ENCODE measurements at regions of chr2 and their contacts with region 1.

Region 1: DNA sequence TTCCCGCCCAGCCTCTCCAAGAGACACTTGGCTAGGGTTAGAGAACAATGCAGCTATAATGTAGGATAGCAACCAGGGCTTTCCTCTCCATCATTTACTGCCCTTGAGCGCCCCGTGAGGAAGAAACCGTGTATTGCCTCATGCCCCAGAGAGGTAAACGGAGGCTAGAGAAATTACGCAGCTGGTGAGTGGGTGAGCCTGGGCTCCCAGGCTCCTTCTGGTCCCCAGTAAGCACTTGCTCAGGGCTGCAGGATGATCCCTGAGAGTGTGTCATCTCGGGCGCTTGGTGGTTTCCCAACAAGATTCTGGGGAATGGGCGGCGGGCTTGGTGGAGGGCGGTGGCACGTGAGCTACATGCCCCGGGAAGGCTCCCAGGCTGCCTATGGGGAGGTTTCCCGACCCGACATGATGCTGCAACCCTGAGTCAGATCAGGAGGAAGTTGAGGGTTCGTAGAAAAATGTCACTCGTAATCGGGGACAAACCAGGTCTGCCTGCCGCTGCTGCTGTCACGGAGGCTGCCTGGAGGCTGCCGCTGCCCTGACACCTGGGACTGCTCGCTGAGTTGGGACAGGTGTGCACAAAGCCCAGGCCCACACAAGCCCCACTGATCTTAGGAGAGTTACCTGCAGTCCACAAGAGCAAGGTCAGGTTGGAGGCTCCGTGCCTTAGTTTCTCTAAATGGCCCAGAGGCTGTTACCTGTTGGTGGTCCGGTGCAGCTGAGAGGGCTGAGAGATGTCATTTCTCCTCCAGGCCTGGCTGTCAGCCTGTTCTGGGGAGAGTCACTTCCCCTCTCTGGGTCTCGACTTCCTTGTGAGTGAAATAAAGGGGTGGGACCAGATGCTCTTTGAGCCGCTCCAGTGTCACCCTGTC is at the start of gene GPR55:
- DNase-seq: peak in 8 of 9 experiments; percentile 24 to 71 (median 54)
- ATAC-seq: peak; percentile 77
- H3K4me3 ChIP-seq: peak within 1 kb of the TSS; percentile 51 to 72
- H3K4me3 Mint-ChIP-seq: peak within 1 kb of the TSS; percentile 87
- H3K27ac ChIP-seq: peak within 1 kb of the TSS; percentile 59 to 61
- H3K27ac Mint-ChIP-seq: peak within 1 kb of the TSS; percentile 95
- H3K4me1 ChIP-seq: peaks cover 40% of the 10 kb centered on the region
- H3K4me1 Mint-ChIP-seq: peaks cover 59% of the 10 kb centered on the region
- H3K27me3 ChIP-seq: no peaks in the 10 kb centered on the region
- H3K27me3 Mint-ChIP-seq: no peaks in the 10 kb centered on the region
- CTCF ChIP-seq: peak; percentile 43
- total RNA-seq, gene GPR55: 3.2 to 3.4 TPM

Region 2: DNA sequence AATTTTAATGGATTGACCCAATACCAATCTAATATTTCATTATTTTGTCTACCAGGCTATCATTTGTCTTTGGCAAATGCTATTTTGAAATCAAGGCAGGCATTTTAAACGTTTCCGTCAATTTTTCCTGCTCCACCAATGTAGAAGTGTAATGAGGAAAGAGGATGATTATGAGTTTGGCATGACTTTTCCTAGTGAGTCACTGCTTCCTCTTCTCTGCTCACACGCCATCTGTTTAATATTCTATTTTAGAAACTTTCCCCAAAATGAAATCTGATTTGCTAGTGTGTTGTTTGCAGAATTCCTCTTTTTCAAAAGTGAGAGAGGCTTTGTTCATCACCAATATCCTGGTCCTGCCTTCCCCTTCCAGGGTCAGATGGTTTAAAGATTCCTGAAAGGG is 1611.1 kb before region 1 on chr2:
- CTCF ChIA-PET with region 1: no interaction called
- POLR2A ChIA-PET with region 1: no interaction called
- intact Hi-C with region 1: no loop called
- DNase-seq: peak in 1 of 9 experiments; percentile 12
- ATAC-seq: no peak
- H3K4me3 ChIP-seq: no peak overlapping the region
- H3K4me3 Mint-ChIP-seq: no peak overlapping the region
- H3K27ac ChIP-seq: no peak overlapping the region
- H3K27ac Mint-ChIP-seq: no peak overlapping the region
- H3K4me1 ChIP-seq: no peaks in the 10 kb centered on the region
- H3K4me1 Mint-ChIP-seq: no peaks in the 10 kb centered on the region
- H3K27me3 ChIP-seq: no peaks in the 10 kb centered on the region
- H3K27me3 Mint-ChIP-seq: no peaks in the 10 kb centered on the region
- CTCF ChIP-seq: no peak

Region 3: DNA sequence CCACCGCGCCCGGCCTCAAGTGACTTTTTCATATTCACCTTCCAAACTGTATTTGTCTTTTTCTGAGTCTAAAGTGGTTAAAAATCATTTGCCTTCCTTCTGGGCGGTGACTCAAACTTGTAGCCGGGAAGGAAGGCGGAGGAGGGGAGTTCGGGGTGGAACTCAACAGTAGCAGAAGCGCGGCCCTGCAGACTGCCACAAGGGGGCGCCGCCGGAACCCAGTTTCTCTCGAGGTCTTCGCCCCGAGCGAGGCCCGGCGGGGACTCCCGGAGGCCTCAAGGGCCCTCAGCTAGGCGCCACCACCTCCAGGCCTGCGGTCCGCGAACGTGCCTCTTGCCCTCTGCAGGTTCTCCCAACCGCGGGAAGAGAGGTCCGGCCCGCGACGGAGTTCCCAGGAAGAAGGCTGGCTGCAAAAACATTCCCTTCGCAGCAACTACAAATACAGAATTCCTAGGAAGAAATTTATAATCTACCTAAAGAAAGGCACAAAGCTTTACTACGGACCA is 76.8 kb before region 1 on chr2:
- CTCF ChIA-PET with region 1: interaction called, 20 read pairs
- POLR2A ChIA-PET with region 1: no interaction called
- intact Hi-C with region 1: no loop called
- DNase-seq: peak; percentile 73 to 94 (median 87)
- ATAC-seq: peak; percentile 91
- H3K4me3 ChIP-seq: no peak overlapping the region
- H3K4me3 Mint-ChIP-seq: no peak overlapping the region
- H3K27ac ChIP-seq: no peak overlapping the region
- H3K27ac Mint-ChIP-seq: no peak overlapping the region
- H3K4me1 ChIP-seq: peaks cover 8% of the 10 kb centered on the region
- H3K4me1 Mint-ChIP-seq: peaks cover 6% of the 10 kb centered on the region
- H3K27me3 ChIP-seq: peaks cover 0 to 9% of the 10 kb centered on the region in 2 experiments
- H3K27me3 Mint-ChIP-seq: peaks cover 14% of the 10 kb centered on the region
- CTCF ChIP-seq: peak; percentile 82

Region 4: GRCh38 chr2:230902180-230902899 is 22.4 kb before region 1 on chr2:
- CTCF ChIA-PET with region 1: interaction called, 5 read pairs
- POLR2A ChIA-PET with region 1: no interaction called
- intact Hi-C with region 1: loop called (anchors 1 to 2 kb)
- DNase-seq: peak in 7 of 9 experiments; percentile 40 to 78 (median 60)
- ATAC-seq: no peak
- H3K4me3 ChIP-seq: no peak overlapping the region
- H3K4me3 Mint-ChIP-seq: no peak overlapping the region
- H3K27ac ChIP-seq: no peak overlapping the region
- H3K27ac Mint-ChIP-seq: no peak overlapping the region
- H3K4me1 ChIP-seq: peaks cover 24% of the 10 kb centered on the region
- H3K4me1 Mint-ChIP-seq: peaks cover 34% of the 10 kb centered on the region
- H3K27me3 ChIP-seq: no peaks in the 10 kb centered on the region
- H3K27me3 Mint-ChIP-seq: no peaks in the 10 kb centered on the region
- CTCF ChIP-seq: peak; percentile 84

Region 5: DNA sequence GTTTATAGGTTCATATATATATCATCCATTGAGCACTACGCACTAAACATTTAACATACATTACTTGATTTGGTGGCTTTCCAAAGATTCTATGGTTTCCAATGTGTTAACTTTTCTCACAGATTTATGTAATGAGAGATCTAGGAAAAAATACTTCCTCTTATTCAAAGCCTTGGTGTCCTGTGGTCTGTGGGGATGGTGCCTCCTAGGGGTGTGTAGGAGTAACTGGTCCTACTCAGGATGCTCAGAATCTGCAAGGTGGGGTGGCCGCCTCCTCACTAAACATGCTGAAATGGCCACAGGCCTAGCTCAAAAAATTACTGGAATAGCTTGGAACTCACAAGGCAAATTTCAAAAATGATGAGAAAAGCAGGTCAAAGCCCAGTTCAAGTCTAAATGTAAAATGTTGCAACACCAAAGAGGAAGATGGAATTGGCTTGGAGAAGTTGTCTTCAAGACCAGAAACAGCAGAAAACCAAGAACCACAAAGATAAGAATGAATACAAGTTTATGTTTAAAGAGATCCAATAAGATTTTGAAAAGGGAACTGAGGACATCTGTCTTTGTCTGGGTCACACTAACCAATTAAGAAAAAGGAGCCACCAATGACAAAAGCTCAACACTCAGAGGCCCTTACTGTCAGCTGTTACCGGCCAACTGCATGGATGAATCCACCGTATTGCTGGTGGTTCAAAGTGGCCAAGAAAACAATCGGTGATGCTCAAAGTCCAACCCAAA is 11.1 kb before region 1 on chr2:
- CTCF ChIA-PET with region 1: interaction called, 8 read pairs
- POLR2A ChIA-PET with region 1: interaction called, 4 read pairs
- intact Hi-C with region 1: loop called in 1 of 2 experiments (anchors 1 kb)
- DNase-seq: peak in 3 of 9 experiments; percentile 49 to 71 (median 59)
- ATAC-seq: peak; percentile 76
- H3K4me3 ChIP-seq: no peak overlapping the region
- H3K4me3 Mint-ChIP-seq: no peak overlapping the region
- H3K27ac ChIP-seq: no peak overlapping the region
- H3K27ac Mint-ChIP-seq: no peak overlapping the region
- H3K4me1 ChIP-seq: peaks cover 2% of the 10 kb centered on the region
- H3K4me1 Mint-ChIP-seq: peaks cover 38% of the 10 kb centered on the region
- H3K27me3 ChIP-seq: peaks cover 0 to under 1% of the 10 kb centered on the region in 2 experiments
- H3K27me3 Mint-ChIP-seq: peaks cover 2% of the 10 kb centered on the region
- CTCF ChIP-seq: peak; percentile 41

Region 6: GRCh38 chr2:230974096-230974913 is 49.6 kb after region 1 on chr2:
- CTCF ChIA-PET with region 1: interaction called, 6 read pairs
- POLR2A ChIA-PET with region 1: no interaction called
- intact Hi-C with region 1: loop called in 1 of 2 experiments (anchors 5 kb)
- DNase-seq: peak; percentile 46 to 96 (median 75)
- ATAC-seq: peak; percentile 85
- H3K4me3 ChIP-seq: peak overlapping the region in 1 of 2 experiments; percentile 9
- H3K4me3 Mint-ChIP-seq: peak overlapping the region; percentile 66
- H3K27ac ChIP-seq: peak overlapping the region; percentile 3 to 67
- H3K27ac Mint-ChIP-seq: peak overlapping the region; percentile 91
- H3K4me1 ChIP-seq: peaks cover 24% of the 10 kb centered on the region
- H3K4me1 Mint-ChIP-seq: peaks cover 52% of the 10 kb centered on the region
- H3K27me3 ChIP-seq: peaks cover 0 to 3% of the 10 kb centered on the region in 2 experiments
- H3K27me3 Mint-ChIP-seq: no peaks in the 10 kb centered on the region
- CTCF ChIP-seq: no peak

Region 7: GRCh38 chr2:230981704-230982103 is 57.0 kb after region 1 on chr2:
- CTCF ChIA-PET with region 1: interaction called, 27 read pairs
- POLR2A ChIA-PET with region 1: interaction called, 6 read pairs
- intact Hi-C with region 1: no loop called
- DNase-seq: peak in 8 of 9 experiments; percentile 22 to 72 (median 50)
- ATAC-seq: peak; percentile 78
- H3K4me3 ChIP-seq: no peak overlapping the region
- H3K4me3 Mint-ChIP-seq: peak overlapping the region; percentile 40
- H3K27ac ChIP-seq: no peak overlapping the region
- H3K27ac Mint-ChIP-seq: peak overlapping the region; percentile 67
- H3K4me1 ChIP-seq: peaks cover 23% of the 10 kb centered on the region
- H3K4me1 Mint-ChIP-seq: peaks cover 51% of the 10 kb centered on the region
- H3K27me3 ChIP-seq: no peaks in the 10 kb centered on the region
- H3K27me3 Mint-ChIP-seq: no peaks in the 10 kb centered on the region
- CTCF ChIP-seq: no peak